Activated CD4-positive, alpha-beta memory T cell treated with anti-CD3 and anti-CD28 coated beads, Interleukin-2, amount 10 ng/mL, durations not matched to agents 7 days and 5 days (primary cell): ENCODE measurements at regions of chr3 and their contacts with region 1.

Region 1: GRCh38 chr3:43286115-43286840 is at the start of gene SNRK:
- DNase-seq: peak; percentile 91
- H3K4me3 Mint-ChIP-seq: peak within 1 kb of the TSS; percentile 94
- H3K27ac Mint-ChIP-seq: peak within 1 kb of the TSS; percentile 94
- H3K4me1 Mint-ChIP-seq: peaks cover 36% of the 10 kb centered on the region
- H3K27me3 Mint-ChIP-seq: peaks cover 7% of the 10 kb centered on the region
- total RNA-seq, gene SNRK: 71.0 to 73.1 TPM

Region 2: DNA sequence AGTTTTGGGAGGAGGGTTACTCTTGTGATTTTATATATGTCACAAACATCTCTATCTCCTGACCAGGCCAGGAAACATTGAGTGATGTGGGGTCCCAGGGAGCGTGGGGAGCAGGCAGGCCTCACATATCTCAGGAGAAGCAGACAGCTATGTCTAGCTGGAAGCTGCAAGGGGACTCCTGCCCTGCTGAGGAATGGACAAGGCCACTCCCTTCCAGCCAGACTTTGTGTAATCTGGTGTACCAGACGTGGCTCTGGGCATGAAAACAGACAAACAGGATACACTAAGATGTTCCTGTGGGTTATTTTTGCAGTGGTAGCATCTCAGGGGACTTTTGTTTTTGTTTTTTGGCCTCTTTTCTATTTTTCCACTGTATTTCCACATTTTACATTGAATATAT is 433.8 kb before region 1 on chr3:
- CTCF ChIA-PET with region 1: no interaction called
- POLR2A ChIA-PET with region 1: no interaction called
- DNase-seq: no peak
- H3K4me3 Mint-ChIP-seq: no peak overlapping the region
- H3K27ac Mint-ChIP-seq: no peak overlapping the region
- H3K4me1 Mint-ChIP-seq: peaks cover 8% of the 10 kb centered on the region
- H3K27me3 Mint-ChIP-seq: peaks cover 5% of the 10 kb centered on the region

Region 3: DNA sequence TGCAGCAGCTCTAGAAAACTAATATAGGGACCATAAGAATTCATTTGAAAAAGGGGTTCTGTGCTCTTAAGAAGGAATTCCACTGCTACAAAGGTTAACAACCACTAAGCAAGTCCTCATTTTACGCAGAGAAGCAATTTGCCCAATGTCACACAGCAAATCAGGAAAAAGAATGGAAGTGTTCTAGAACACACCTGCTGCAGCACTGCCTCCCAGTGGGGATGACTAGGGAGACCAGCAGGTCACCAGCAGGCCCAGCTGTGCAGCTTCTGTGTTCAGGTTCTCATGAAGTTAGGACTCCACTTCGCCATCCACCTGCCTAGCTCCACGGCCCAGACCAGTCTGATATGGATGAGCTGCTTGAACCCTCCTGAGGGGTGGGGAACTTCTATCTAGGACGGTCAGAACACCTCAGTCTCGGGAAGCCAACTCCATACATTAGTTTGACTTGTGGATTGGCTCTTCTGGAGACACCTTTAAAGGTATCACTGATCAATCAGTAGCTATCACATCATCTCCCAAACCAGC is 199.0 kb before region 1 on chr3:
- CTCF ChIA-PET with region 1: no interaction called
- POLR2A ChIA-PET with region 1: no interaction called
- DNase-seq: no peak
- H3K4me3 Mint-ChIP-seq: no peak overlapping the region
- H3K27ac Mint-ChIP-seq: no peak overlapping the region
- H3K4me1 Mint-ChIP-seq: peaks cover 2% of the 10 kb centered on the region
- H3K27me3 Mint-ChIP-seq: no peaks in the 10 kb centered on the region

Region 4: DNA sequence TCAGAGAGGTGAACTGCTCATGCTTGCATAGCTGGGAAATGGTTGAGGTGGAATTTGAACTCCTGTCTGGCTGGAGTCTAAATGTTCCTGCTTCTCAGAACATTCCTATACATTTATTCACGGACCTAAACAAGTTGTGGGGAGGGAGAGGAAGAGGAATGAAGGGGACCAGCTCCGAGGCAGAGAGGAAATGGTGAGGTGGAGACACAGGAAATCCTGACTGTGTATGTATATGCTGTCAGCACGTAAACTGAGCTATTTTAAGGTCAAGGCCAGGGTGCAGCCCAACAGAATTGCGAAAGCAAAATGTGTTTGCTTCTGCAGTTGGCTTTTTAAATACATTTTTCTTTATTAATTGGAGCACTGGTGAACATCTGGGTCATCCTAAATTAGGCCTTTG is 106.3 kb before region 1 on chr3:
- CTCF ChIA-PET with region 1: no interaction called
- POLR2A ChIA-PET with region 1: interaction called, 19 read pairs
- DNase-seq: peak; percentile 66
- H3K4me3 Mint-ChIP-seq: peak overlapping the region; percentile 48
- H3K27ac Mint-ChIP-seq: peak overlapping the region; percentile 93
- H3K4me1 Mint-ChIP-seq: peaks cover 48% of the 10 kb centered on the region
- H3K27me3 Mint-ChIP-seq: no peaks in the 10 kb centered on the region

Region 5: DNA sequence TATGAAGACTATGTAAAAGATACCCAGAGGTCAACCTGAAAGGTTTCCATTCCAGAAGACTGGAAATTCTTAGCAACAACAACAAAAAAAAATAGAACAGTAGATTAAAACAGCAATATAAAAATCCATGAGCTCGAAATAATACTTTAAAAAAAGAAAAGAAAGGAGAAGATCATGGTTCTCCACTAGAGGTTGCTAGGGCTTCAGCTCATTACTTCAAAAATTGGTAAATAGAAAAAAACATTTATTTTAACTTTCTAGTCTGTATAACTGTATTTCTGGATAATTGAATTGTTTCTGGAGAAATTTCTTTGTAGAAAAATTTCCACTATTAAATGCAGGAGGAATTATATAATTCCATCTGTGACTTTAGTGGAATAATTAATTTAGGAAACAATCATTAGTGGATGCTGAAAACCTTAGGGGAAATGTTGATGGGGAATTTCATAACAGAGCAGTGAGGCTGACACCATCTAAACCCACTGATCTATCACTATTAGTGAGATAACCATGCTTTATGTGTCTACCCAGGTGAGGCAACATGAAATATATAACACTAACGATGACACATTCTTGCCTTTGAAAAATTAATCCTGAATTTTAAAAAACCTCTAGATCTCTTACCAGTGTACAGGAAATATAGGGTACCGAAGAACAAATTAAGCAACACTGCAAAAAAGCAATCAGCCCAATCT is 62.5 kb before region 1 on chr3:
- CTCF ChIA-PET with region 1: interaction called, 12 read pairs
- POLR2A ChIA-PET with region 1: no interaction called
- DNase-seq: no peak
- H3K4me3 Mint-ChIP-seq: no peak overlapping the region
- H3K27ac Mint-ChIP-seq: no peak overlapping the region
- H3K4me1 Mint-ChIP-seq: peaks cover 21% of the 10 kb centered on the region
- H3K27me3 Mint-ChIP-seq: peaks cover 2% of the 10 kb centered on the region

Region 6: DNA sequence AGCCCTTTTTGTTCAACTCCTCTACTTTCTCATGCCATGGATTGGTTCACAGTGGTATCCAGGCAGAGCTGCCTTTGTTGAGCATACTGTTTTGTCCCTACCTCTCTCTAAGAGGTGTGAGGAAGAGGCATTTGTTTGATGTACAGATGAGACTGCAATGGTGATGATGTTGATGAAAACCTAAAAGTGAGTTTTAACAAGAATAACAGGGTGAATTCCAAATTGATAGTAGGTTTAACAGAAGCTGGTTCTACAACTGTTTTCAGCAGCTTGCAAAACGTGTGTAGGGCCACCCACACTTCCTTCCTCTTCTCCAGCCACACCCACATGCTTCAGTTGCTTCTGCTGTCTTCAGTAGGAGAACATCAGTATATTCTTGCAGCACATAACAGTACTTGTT is 10.3 kb after region 1 on chr3:
- CTCF ChIA-PET with region 1: interaction called, 6 read pairs
- POLR2A ChIA-PET with region 1: interaction called, 82 read pairs
- DNase-seq: peak; percentile 69
- H3K4me3 Mint-ChIP-seq: peak overlapping the region; percentile 72
- H3K27ac Mint-ChIP-seq: peak overlapping the region; percentile 87
- H3K4me1 Mint-ChIP-seq: peaks cover 77% of the 10 kb centered on the region
- H3K27me3 Mint-ChIP-seq: no peaks in the 10 kb centered on the region

Region 7: DNA sequence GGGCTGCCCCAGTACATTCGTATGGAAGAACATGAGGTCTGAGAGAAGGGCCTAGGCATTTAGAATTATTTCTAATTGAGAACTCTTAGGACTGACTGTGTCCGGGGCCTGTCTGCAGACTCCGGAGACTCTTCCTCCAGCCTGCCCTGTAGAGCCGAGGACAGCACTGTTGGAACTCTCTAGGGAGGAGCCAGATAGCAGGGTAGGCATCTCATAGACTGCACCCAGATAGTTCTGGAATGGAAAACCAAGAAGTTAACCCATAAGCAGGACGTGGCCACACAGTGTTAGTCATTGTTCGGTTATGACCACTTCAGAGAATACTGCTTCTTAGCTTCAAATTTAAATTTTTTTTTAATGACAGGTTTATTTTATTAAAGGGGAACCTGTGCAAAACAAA is 59.6 kb after region 1 on chr3:
- CTCF ChIA-PET with region 1: interaction called, 9 read pairs
- POLR2A ChIA-PET with region 1: interaction called, 42 read pairs
- DNase-seq: peak; percentile 45
- H3K4me3 Mint-ChIP-seq: no peak overlapping the region
- H3K27ac Mint-ChIP-seq: peak overlapping the region; percentile 89
- H3K4me1 Mint-ChIP-seq: peaks cover 68% of the 10 kb centered on the region
- H3K27me3 Mint-ChIP-seq: no peaks in the 10 kb centered on the region

Region 8: GRCh38 chr3:43389388-43390254 is 103.3 kb after region 1 on chr3:
- CTCF ChIA-PET with region 1: no interaction called
- POLR2A ChIA-PET with region 1: interaction called, 18 read pairs
- DNase-seq: peak; percentile 85
- H3K4me3 Mint-ChIP-seq: peak overlapping the region; percentile 26
- H3K27ac Mint-ChIP-seq: peak overlapping the region; percentile 94
- H3K4me1 Mint-ChIP-seq: peaks cover 45% of the 10 kb centered on the region
- H3K27me3 Mint-ChIP-seq: peaks cover under 1% of the 10 kb centered on the region

Region 9: GRCh38 chr3:43503067-43503728 is 216.9 kb after region 1 on chr3:
- CTCF ChIA-PET with region 1: no interaction called
- POLR2A ChIA-PET with region 1: interaction called, 17 read pairs
- DNase-seq: no peak
- H3K4me3 Mint-ChIP-seq: no peak overlapping the region
- H3K27ac Mint-ChIP-seq: no peak overlapping the region
- H3K4me1 Mint-ChIP-seq: peaks cover 41% of the 10 kb centered on the region
- H3K27me3 Mint-ChIP-seq: no peaks in the 10 kb centered on the region

Region 10: GRCh38 chr3:44077246-44077645 is 791.0 kb after region 1 on chr3:
- CTCF ChIA-PET with region 1: no interaction called
- POLR2A ChIA-PET with region 1: no interaction called
- DNase-seq: no peak
- H3K4me3 Mint-ChIP-seq: no peak overlapping the region
- H3K27ac Mint-ChIP-seq: no peak overlapping the region
- H3K4me1 Mint-ChIP-seq: no peaks in the 10 kb centered on the region
- H3K27me3 Mint-ChIP-seq: peaks cover 10% of the 10 kb centered on the region